ENCODE measurements at regions of chr2 and their contacts with region 1.

Region 1: GRCh38 chr2:152025678-152026287 is 73.1 kb downstream of the CACNB4 start:
- DNase-seq: peak; percentile 57 to 87 (median 72)
- ATAC-seq: peak; percentile 93
- H3K4me3 ChIP-seq: peak overlapping the region; percentile 34
- H3K4me3 Mint-ChIP-seq: peak overlapping the region; percentile 82
- H3K27ac ChIP-seq: no peak overlapping the region
- H3K27ac Mint-ChIP-seq: no peak overlapping the region
- H3K4me1 ChIP-seq: no peaks in the 10 kb centered on the region
- H3K4me1 Mint-ChIP-seq: no peaks in the 10 kb centered on the region
- H3K27me3 ChIP-seq: no peaks in the 10 kb centered on the region
- H3K27me3 Mint-ChIP-seq: peaks cover 11% of the 10 kb centered on the region
- CTCF ChIP-seq: peak; percentile 99

Region 2: DNA sequence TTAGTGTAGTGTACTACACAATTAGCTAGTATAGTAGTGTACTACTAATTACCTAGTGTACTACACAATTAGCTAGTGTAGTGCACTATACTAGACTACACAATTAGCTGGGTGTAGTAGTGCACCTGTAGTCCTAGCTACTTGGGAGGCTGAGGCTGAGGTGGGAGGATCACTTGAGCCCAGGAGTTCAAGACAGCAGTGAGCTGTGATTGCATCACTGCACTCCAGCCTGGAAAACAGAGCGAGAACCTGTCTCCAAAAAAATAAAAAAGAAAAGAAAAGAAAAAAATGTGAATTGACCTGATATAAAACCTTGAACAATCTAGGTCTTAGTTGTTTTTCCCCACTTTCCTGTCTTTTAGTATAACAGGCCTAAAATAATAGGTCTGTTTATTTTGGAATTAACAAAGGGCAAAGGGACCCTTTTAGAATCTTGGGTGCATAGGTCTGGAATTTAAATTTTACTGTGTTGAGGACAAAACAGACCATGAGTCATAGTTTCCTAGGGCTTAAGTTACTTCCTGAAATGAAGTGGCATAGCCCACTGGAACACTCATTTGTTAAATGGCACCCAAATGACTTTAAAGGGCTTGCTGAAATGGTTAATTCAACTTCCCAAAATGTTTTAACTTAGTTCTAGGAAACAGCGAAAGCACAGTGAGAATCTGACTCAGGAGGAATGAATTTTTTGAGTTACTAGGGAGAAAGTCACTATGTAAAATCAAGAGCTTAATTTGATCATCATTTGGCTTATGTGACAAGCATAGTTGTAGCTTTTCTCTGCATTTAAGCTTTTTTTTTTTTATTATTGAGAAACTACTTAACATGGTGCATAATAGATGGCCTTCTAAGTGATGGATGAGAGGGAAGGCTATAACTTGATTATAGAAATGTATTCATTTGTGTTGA is 146.9 kb before region 1 on chr2:
- CTCF ChIA-PET with region 1: no interaction called
- POLR2A ChIA-PET with region 1: no interaction called
- intact Hi-C with region 1: no loop called
- DNase-seq: peak in 3 of 14 experiments; percentile 8 to 23 (median 12)
- ATAC-seq: no peak
- H3K4me3 ChIP-seq: no peak overlapping the region
- H3K4me3 Mint-ChIP-seq: no peak overlapping the region
- H3K27ac ChIP-seq: no peak overlapping the region
- H3K27ac Mint-ChIP-seq: no peak overlapping the region
- H3K4me1 ChIP-seq: no peaks in the 10 kb centered on the region
- H3K4me1 Mint-ChIP-seq: no peaks in the 10 kb centered on the region
- H3K27me3 ChIP-seq: no peaks in the 10 kb centered on the region
- H3K27me3 Mint-ChIP-seq: no peaks in the 10 kb centered on the region
- CTCF ChIP-seq: no peak

Region 3: DNA sequence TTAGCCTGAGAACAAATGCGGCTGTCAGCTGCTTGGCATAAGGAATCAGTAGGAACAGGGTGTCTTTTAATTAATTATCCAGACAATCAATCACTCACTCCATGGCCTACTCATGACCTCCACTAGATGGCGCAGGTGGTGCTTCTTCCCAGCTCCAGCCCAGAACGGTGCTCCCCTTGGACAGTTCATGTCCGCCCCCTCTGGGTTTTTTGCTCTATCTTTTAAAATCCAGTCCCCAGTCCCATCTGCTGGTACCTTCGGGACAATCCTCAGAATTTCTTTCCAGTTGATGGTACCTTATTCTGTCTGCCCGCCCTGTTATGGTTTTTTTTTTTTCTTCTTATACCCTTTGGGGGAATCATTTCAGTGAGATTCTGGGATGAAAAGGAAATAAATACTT is 26.7 kb before region 1 on chr2:
- CTCF ChIA-PET with region 1: interaction called, 4 read pairs
- POLR2A ChIA-PET with region 1: no interaction called
- intact Hi-C with region 1: loop called in 1 of 2 experiments (anchors 1 kb)
- DNase-seq: peak in 13 of 14 experiments; percentile 4 to 68 (median 19)
- ATAC-seq: peak; percentile 60
- H3K4me3 ChIP-seq: no peak overlapping the region
- H3K4me3 Mint-ChIP-seq: no peak overlapping the region
- H3K27ac ChIP-seq: no peak overlapping the region
- H3K27ac Mint-ChIP-seq: no peak overlapping the region
- H3K4me1 ChIP-seq: no peaks in the 10 kb centered on the region
- H3K4me1 Mint-ChIP-seq: no peaks in the 10 kb centered on the region
- H3K27me3 ChIP-seq: no peaks in the 10 kb centered on the region
- H3K27me3 Mint-ChIP-seq: peaks cover 4% of the 10 kb centered on the region
- CTCF ChIP-seq: peak; percentile 81

Region 4: GRCh38 chr2:152071092-152071491 is 45.3 kb after region 1 on chr2:
- CTCF ChIA-PET with region 1: no interaction called
- POLR2A ChIA-PET with region 1: no interaction called
- intact Hi-C with region 1: no loop called
- DNase-seq: no peak
- ATAC-seq: no peak
- H3K4me3 ChIP-seq: no peak overlapping the region
- H3K4me3 Mint-ChIP-seq: no peak overlapping the region
- H3K27ac ChIP-seq: no peak overlapping the region
- H3K27ac Mint-ChIP-seq: no peak overlapping the region
- H3K4me1 ChIP-seq: no peaks in the 10 kb centered on the region
- H3K4me1 Mint-ChIP-seq: no peaks in the 10 kb centered on the region
- H3K27me3 ChIP-seq: no peaks in the 10 kb centered on the region
- H3K27me3 Mint-ChIP-seq: no peaks in the 10 kb centered on the region
- CTCF ChIP-seq: no peak

Measured in CD4-positive, alpha-beta T cell (primary cell).